Activated naive CD4-positive, alpha-beta T cell treated with anti-CD3 and anti-CD28 coated beads for 36 hours (primary cell): ENCODE measurements at regions of chr17 and their contacts with region 1.

Region 1: DNA sequence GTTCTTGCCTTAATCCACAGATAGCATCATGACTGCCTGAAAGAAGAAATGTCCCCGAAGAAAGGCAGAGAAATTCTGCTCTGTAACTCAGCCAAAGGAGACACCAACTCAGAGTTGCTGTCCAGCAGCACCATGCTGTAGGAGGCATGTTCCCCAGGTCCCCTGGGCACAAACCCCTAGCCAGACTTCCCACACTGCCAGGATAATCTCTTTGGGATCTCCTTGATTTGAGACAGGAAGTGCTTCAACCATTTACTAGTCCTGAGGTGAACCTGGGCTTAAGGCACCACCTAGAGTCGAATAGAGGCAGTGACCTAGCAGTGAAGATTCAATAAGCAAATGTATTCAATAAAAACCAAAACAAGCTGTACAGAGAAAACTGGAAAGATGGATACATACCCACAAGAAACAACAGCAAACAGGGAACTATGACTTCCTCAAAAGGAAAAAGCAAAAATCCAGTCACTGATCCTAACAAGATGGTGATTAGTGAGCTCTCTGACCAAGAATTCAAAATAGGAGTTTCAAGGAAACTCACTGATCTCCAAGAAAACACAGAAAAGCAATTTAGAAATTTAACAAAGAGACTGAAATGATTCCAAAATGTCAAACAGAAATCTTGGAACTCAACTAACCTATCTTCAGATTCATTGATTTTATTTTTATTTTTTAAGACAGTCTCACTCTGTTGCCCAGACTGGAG is 5.7 kb downstream of the OR4D2 start:
- DNase-seq: peak; percentile 70
- H3K4me3 Mint-ChIP-seq: no peak overlapping the region
- H3K27ac Mint-ChIP-seq: no peak overlapping the region
- H3K4me1 Mint-ChIP-seq: peaks cover 33% of the 10 kb centered on the region
- H3K27me3 Mint-ChIP-seq: no peaks in the 10 kb centered on the region

Region 2: DNA sequence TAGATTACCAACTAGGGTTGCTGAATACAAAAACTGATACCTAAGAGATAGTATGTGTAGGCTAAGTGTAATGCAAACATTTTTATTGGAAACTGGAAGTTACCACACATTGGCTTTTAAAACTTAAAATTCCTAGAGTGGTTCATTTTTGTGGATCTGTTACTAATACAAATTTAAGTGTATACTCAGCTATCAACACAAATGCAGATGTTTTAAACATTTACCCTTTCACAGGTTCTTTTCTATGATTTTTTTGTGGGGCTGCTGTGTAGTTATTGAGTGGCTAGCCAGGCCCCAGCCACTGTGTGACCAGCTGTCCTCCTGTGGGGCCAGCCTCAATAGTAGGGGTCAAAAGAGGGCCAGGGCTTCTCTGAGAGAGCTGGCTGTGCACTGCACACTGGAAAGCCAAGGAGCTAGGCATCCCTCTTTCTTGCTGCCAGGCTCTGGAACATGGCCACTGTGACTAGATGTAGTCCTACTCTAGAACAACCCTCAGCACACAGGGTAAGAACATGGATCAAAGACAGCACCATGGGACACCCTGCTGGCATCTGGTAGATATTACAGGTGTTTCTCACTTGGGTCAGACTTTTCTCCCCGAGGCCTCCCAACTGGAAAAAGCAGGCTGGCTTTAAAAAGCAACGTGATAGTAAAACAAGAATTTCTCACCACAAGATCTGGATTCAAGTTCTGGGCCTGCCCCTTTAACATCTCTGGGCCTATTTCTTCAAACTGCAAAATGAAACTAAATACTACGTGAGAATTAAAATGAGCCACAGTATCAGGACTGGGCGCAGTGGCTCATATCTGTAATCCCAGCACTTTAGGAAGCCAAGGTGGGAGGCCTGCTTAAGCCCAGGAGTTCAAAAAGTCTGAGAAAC is 177.2 kb before region 1 on chr17:
- CTCF ChIA-PET with region 1: interaction called, 12 read pairs
- intact Hi-C with region 1: loop called (anchors 5 kb)
- DNase-seq: peak; percentile 80
- H3K4me3 Mint-ChIP-seq: peak overlapping the region; percentile 14
- H3K27ac Mint-ChIP-seq: peak overlapping the region; percentile 68
- H3K4me1 Mint-ChIP-seq: peaks cover 70% of the 10 kb centered on the region
- H3K27me3 Mint-ChIP-seq: no peaks in the 10 kb centered on the region

Region 3: GRCh38 chr17:58112970-58113631 is 59.4 kb before region 1 on chr17:
- CTCF ChIA-PET with region 1: interaction called, 7 read pairs
- intact Hi-C with region 1: loop called (anchors 2 kb)
- DNase-seq: peak; percentile 94
- H3K4me3 Mint-ChIP-seq: no peak overlapping the region
- H3K27ac Mint-ChIP-seq: no peak overlapping the region
- H3K4me1 Mint-ChIP-seq: no peaks in the 10 kb centered on the region
- H3K27me3 Mint-ChIP-seq: no peaks in the 10 kb centered on the region

Region 4: GRCh38 chr17:58121925-58122324 is 50.6 kb before region 1 on chr17:
- CTCF ChIA-PET with region 1: interaction called, 17 read pairs
- intact Hi-C with region 1: loop called (anchors 1 kb)
- DNase-seq: peak; percentile 40
- H3K4me3 Mint-ChIP-seq: no peak overlapping the region
- H3K27ac Mint-ChIP-seq: no peak overlapping the region
- H3K4me1 Mint-ChIP-seq: peaks cover 6% of the 10 kb centered on the region
- H3K27me3 Mint-ChIP-seq: no peaks in the 10 kb centered on the region

Region 5: DNA sequence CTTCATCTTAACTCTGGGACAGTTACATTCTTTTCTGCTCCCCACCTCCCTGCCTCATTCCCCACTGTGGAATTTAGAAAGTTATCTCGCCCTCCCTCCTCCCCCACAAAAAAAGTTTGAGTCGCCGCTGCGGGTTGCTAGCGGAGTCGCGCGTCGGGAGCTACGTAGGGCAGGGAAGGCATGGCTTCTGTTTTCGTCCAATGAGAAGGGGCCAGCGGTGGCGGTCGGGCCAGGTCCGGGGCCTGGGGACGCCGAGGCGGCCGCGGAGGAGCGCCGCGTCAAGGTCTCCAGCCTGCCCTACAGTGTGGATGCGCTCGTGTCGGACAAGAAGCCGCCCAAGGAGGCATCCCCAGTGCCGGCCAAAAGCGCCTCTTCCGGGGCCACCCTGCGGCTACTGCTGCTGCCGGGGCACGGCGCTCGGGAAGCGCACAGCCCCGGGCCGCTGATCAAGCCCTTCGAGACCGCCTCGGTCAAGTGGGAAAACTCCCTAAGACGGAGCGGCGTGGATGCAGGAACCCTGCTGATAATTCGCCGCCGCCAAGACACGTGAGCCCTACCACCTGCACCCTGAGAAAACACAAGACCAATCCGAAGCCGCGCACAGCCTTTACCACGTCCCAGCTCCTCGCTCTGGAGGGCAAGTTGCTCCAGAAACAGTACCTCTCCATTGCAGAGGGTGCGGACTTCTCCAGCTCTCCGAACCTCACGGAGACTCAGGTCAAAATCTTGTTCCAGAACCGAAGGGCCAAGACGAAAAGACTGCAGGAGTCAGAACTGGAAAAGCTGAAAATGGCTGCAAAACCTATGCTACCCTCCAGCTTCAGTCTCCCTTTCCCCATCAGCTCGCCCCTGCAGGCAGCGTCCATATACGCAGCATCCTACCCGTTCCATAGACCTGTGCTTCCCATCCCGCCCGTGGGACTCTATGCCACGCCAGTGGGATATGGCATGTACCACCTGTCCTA is 15.4 kb before region 1 on chr17:
- CTCF ChIA-PET with region 1: interaction called, 20 read pairs
- intact Hi-C with region 1: no loop called
- DNase-seq: peak; percentile 71
- H3K4me3 Mint-ChIP-seq: peak overlapping the region; percentile 76
- H3K27ac Mint-ChIP-seq: peak overlapping the region; percentile 66
- H3K4me1 Mint-ChIP-seq: peaks cover 41% of the 10 kb centered on the region
- H3K27me3 Mint-ChIP-seq: no peaks in the 10 kb centered on the region